ENCODE measurements at regions of chr5 and their contacts with region 1.

Region 1: GRCh38 chr5:42108470-42108869 is 183.4 kb downstream of the FBXO4 start:
- DNase-seq: peak in 1 of 2 experiments; percentile 86
- H3K4me3 ChIP-seq: no peak overlapping the region
- H3K27ac ChIP-seq: no peak overlapping the region
- H3K4me1 ChIP-seq: no peaks in the 10 kb centered on the region
- H3K27me3 ChIP-seq: peaks cover 17% of the 10 kb centered on the region; the same call in 1 of the 2 replicates
- CTCF ChIP-seq: no peak

Region 2: GRCh38 chr5:40981420-40981819 is 1127.0 kb before region 1 on chr5:
- CTCF ChIA-PET with region 1: interaction called, 12 read pairs
- POLR2A ChIA-PET with region 1: no interaction called
- intact Hi-C with region 1: no loop called
- DNase-seq: no peak
- H3K4me3 ChIP-seq: no peak overlapping the region
- H3K27ac ChIP-seq: no peak overlapping the region
- H3K4me1 ChIP-seq: no peaks in the 10 kb centered on the region
- H3K27me3 ChIP-seq: no peaks in the 10 kb centered on the region
- CTCF ChIP-seq: no peak

Region 3: GRCh38 chr5:42143361-42143760 is 34.9 kb after region 1 on chr5:
- CTCF ChIA-PET with region 1: no interaction called
- POLR2A ChIA-PET with region 1: no interaction called
- intact Hi-C with region 1: no loop called
- DNase-seq: no peak
- H3K4me3 ChIP-seq: no peak overlapping the region
- H3K27ac ChIP-seq: no peak overlapping the region
- H3K4me1 ChIP-seq: no peaks in the 10 kb centered on the region
- H3K27me3 ChIP-seq: 0 out of 2 replicates have a peak, but pooled peaks cover 7% of the 10 kb centered on the region
- CTCF ChIP-seq: no peak

Measured in PC-9 (cell line).